PC-3 (cell line): ENCODE measurements at regions of chr3 and their contacts with region 1.

Region 1: GRCh38 chr3:11601446-11602238 is 42.1 kb downstream of the VGLL4 start:
- DNase-seq: peak; percentile 51
- ATAC-seq: peak; percentile 1; the same call in 1 of the 2 replicates
- H3K4me3 ChIP-seq: 0 out of 2 replicates have a peak overlapping the region, but pooled peaks have one; percentile 10
- H3K27ac ChIP-seq: peak overlapping the region; percentile 88
- H3K4me1 ChIP-seq: peaks cover 42% of the 10 kb centered on the region
- H3K27me3 ChIP-seq: no peaks in the 10 kb centered on the region
- CTCF ChIP-seq: no peak

Region 2: DNA sequence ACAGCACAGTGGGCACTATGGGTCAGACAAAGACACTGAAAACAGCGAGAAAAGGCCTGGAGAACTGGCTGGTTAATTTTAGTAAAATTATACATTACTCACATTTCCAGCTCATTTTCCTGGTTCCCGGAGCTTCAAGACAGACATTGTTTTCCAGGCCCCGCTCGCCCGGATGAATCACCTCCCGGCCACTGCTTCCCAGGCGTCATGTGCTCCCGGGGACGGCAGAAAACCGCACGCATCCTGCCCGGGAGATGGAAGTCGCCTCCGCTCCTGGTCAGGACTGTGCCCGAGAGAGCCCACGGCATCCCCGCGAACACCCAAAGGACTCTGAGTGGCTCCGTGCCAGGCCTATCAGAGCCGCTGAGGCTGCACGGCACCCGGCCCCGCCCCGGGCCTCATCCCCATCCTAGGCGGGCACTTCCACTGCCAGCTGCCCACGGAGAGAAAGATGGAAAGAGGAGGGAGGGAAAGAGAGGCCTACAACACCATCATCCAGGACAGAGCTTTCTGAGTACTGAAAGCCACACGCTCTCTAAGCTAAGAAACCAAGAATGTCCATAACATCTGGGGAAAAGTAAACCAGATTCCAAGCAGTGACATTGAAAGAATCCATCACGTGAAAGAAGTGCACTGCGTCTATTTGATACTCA is 33.0 kb before region 1 on chr3:
- CTCF ChIA-PET with region 1: no interaction called
- POLR2A ChIA-PET with region 1: no interaction called
- intact Hi-C with region 1: loop called (anchors 1 kb)
- DNase-seq: peak; percentile 93
- ATAC-seq: peak; percentile 86
- H3K4me3 ChIP-seq: peak overlapping the region; percentile 54
- H3K27ac ChIP-seq: peak overlapping the region; percentile 99
- H3K4me1 ChIP-seq: peaks cover 47% of the 10 kb centered on the region
- H3K27me3 ChIP-seq: no peaks in the 10 kb centered on the region
- CTCF ChIP-seq: no peak